Endothelial cell of umbilical vein (primary cell): ENCODE measurements at regions of chr2 and their contacts with region 1.

Region 1: DNA sequence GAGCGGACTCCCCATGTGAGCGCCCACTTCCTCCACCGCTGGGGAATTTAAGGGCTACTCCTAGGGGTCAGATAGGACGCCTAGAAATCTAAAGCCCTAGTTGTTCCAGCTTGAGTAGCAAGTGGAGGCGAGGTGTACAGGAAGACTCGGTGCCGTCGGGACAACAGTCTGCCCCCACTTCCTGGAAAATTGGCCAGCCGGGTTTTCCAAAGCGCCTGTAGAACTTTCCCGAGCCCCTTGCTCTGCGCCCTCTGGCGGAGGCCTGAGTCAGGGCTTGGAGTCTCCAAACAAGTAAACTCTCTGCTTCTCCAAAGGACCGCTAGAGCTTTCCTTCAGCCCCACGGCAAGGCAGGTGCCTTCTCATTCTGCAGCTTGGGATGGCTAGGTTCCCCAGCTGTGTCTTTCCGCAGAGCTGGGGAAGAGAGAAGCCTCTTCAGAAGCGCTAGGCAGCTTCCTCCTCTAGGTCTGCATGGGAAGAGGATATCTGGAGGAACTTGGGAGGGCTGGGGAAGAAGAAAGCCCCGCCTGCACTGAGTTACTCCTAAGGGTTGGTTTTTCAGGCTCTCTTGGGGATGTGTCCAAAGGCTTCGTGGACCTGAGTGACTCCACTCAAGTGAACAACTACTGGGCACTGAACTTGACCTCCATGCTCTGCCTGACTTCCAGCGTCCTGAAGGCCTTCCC is 688 bp downstream of the SPR start:
- DNase-seq: peak; percentile 84
- H3K4me3 ChIP-seq: peak overlapping the region; percentile 54 to 81 (median 73)
- H3K27ac ChIP-seq: peak overlapping the region; percentile 74
- H3K4me1 ChIP-seq: peaks cover 13% of the 10 kb centered on the region
- H3K27me3 ChIP-seq: no peaks in the 10 kb centered on the region
- CTCF ChIP-seq: peak; percentile 97 to 99
- POLR2A ChIP-seq: no peak

Region 2: DNA sequence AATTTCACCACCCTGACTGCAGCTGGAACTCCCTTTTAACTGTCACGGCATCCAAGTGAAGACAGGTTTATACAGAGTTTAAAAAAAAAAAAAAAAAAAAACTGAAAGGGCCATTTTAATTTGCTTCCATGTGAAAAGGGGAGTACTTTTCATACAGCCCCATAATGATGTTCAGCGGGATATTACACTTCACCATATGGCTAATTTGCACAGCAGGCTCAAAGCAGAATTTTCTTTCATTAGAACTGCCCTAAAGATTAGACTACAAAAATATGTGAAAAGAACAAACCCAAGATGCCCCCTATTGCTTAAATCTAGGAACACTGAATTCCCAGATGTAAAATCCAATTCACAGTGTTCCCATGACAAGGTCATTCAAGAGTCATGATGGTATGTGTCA is 363.8 kb before region 1 on chr2:
- CTCF ChIA-PET with region 1: no interaction called
- POLR2A ChIA-PET with region 1: no interaction called
- dilution Hi-C with region 1: no loop called
- intact Hi-C with region 1: no loop called
- DNase-seq: no peak
- H3K4me3 ChIP-seq: no peak overlapping the region
- H3K27ac ChIP-seq: no peak overlapping the region
- H3K4me1 ChIP-seq: peaks cover 7% of the 10 kb centered on the region
- H3K27me3 ChIP-seq: no peaks in the 10 kb centered on the region
- CTCF ChIP-seq: no peak
- POLR2A ChIP-seq: no peak

Region 3: GRCh38 chr2:72862239-72862988 is 25.5 kb before region 1 on chr2:
- CTCF ChIA-PET with region 1: interaction called, 32 read pairs
- POLR2A ChIA-PET with region 1: no interaction called
- dilution Hi-C with region 1: no loop called
- intact Hi-C with region 1: no loop called
- DNase-seq: peak; percentile 92
- H3K4me3 ChIP-seq: no peak overlapping the region
- H3K27ac ChIP-seq: no peak overlapping the region
- H3K4me1 ChIP-seq: peaks cover 6% of the 10 kb centered on the region
- H3K27me3 ChIP-seq: peaks cover 8 to 26% of the 10 kb centered on the region in 2 experiments
- CTCF ChIP-seq: peak; percentile 98 to 100
- POLR2A ChIP-seq: no peak

Region 4: GRCh38 chr2:72917872-72918553 is 30.1 kb after region 1 on chr2:
- CTCF ChIA-PET with region 1: interaction called, 8 read pairs
- POLR2A ChIA-PET with region 1: no interaction called
- dilution Hi-C with region 1: no loop called
- intact Hi-C with region 1: loop called (anchors 2 kb)
- DNase-seq: no peak
- H3K4me3 ChIP-seq: no peak overlapping the region
- H3K27ac ChIP-seq: no peak overlapping the region
- H3K4me1 ChIP-seq: peaks cover 11% of the 10 kb centered on the region
- H3K27me3 ChIP-seq: peaks cover 87 to 98% of the 10 kb centered on the region in 2 experiments
- CTCF ChIP-seq: no peak
- POLR2A ChIP-seq: no peak

Region 5: DNA sequence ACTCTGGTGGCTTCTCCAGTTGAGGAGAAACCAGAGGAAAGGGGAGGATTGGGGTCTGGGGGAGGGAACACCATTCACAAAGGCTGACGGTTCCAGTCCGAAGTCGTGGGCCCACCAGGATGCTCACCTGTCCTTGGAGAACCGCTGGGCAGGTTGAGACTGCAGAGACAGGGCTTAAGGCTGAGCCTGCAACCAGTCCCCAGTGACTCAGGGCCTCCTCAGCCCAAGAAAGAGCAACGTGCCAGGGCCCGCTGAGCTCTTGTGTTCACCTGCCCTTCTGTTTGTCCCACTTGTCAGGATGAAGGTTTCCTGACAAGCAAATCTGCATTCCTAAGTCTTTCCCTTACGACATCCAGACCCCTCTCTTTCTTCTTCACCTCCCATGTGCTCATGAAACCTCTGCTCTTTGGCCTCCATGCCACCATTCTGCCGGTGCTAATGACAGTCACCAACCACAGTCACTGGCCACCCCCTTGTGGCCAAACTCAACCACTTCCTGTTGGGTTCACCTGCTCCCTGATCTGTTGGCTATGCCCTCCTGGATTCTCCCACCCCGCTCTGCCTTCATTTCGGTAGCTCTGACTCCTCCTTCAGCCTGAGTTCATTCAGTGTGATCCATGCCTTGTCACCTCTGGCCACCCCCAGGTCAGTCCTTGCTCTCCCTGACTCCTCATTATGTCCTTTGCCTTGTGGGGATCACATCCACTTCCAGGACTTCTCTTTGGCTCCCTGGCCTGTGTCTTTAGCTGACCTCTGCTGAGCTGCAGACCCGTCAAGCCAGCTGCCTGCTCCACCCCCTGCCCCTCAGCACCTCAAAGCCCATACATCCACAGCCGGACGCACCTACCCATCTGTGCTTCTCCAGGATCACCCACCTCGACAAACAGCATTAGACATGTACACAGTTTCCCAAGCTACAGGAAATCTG is 47.1 kb after region 1 on chr2:
- CTCF ChIA-PET with region 1: interaction called, 26 read pairs
- POLR2A ChIA-PET with region 1: no interaction called
- dilution Hi-C with region 1: no loop called
- intact Hi-C with region 1: loop called (anchors 1 kb)
- DNase-seq: no peak
- H3K4me3 ChIP-seq: no peak overlapping the region
- H3K27ac ChIP-seq: no peak overlapping the region
- H3K4me1 ChIP-seq: no peaks in the 10 kb centered on the region
- H3K27me3 ChIP-seq: peaks cover 6 to 20% of the 10 kb centered on the region in 2 experiments
- CTCF ChIP-seq: peak in 1 of 2 donors; percentile 8
- POLR2A ChIP-seq: no peak

Region 6: DNA sequence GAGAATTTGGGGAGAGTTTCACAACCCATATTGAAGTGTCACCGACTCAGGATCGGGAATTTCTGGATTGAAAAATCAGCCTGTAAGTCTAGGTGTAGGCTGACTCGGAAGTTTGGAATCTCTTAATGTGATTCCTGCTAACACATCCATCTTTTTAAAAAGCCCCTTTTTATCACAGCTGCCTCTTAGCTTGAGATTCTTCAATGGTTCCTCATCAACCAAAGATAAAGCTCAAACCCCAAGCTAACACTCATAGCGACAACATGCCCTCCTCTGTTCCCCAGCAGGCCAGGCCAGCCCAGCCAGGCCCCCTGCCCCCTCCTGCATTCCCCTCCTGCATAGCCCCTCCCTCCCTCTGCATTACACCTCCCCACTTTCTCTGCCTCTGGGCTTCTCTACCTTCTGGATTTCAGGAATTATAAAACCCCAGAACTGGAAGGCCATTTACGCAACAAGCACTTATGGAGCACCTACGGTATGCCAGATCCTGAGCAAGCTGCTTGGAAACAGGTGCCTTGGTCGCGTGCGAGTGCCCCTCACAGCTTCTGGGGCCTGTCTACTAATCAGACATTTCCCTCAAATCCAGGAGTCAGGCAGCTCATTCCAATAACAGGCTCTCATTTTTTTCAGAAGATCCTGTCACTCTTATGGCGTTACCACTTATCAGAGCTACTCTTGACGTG is 92.8 kb after region 1 on chr2:
- CTCF ChIA-PET with region 1: interaction called, 178 read pairs
- POLR2A ChIA-PET with region 1: no interaction called
- dilution Hi-C with region 1: no loop called
- intact Hi-C with region 1: no loop called
- DNase-seq: no peak
- H3K4me3 ChIP-seq: no peak overlapping the region
- H3K27ac ChIP-seq: no peak overlapping the region
- H3K4me1 ChIP-seq: peaks cover 5% of the 10 kb centered on the region
- H3K27me3 ChIP-seq: no peaks in the 10 kb centered on the region
- CTCF ChIP-seq: no peak
- POLR2A ChIP-seq: no peak

Region 7: DNA sequence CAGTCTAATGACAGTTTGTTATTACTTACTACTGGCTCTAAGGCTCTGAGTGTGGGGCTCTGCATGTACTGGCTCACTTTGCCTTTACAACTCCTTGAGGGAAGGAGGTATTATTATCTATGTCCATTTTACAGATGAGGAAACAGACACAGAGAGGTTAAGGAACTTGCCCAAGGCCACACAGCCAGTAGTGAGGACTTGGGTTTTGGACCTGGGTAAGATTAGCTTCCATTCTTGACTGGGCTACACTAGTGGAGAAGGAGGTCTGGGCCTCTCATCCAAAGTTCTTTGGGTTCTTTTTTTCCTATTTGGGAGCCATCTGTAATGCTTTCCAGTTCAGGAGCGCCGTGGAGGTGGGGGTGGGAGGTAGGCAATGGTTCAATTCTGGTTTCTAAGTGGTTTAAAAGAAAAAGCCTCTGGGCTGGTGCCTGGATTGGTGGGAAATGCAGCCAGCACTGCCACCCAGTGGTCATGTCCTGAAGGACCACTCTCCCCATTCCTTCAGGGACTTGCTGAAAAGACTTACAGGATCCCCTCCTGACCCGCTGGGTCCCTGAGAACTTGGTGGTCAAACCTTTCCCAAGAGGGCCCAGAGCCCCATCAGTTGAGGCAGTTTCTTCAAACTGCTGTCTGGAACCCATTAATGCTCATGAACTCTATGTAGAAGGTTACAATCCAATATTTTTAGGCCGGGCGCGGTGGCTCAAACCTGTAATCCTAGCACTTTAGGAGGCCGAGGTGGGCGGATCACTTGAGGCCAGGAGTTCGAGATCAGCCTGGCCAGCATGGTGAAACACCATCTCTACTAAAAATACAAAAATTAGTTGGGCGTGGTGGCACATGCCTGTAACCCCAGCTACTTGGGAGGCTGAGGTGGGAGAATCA is 275.8 kb after region 1 on chr2:
- CTCF ChIA-PET with region 1: interaction called, 188 read pairs
- POLR2A ChIA-PET with region 1: no interaction called
- dilution Hi-C with region 1: no loop called
- intact Hi-C with region 1: loop called (anchors 1 kb)
- DNase-seq: peak; percentile 84
- H3K4me3 ChIP-seq: no peak overlapping the region
- H3K27ac ChIP-seq: no peak overlapping the region
- H3K4me1 ChIP-seq: peaks cover 2% of the 10 kb centered on the region
- H3K27me3 ChIP-seq: no peaks in the 10 kb centered on the region
- CTCF ChIP-seq: peak; percentile 86 to 89
- POLR2A ChIP-seq: no peak